Ovary (tissue), 10 donors: ENCODE measurements at regions of chr11 and their contacts with region 1.

Region 1: DNA sequence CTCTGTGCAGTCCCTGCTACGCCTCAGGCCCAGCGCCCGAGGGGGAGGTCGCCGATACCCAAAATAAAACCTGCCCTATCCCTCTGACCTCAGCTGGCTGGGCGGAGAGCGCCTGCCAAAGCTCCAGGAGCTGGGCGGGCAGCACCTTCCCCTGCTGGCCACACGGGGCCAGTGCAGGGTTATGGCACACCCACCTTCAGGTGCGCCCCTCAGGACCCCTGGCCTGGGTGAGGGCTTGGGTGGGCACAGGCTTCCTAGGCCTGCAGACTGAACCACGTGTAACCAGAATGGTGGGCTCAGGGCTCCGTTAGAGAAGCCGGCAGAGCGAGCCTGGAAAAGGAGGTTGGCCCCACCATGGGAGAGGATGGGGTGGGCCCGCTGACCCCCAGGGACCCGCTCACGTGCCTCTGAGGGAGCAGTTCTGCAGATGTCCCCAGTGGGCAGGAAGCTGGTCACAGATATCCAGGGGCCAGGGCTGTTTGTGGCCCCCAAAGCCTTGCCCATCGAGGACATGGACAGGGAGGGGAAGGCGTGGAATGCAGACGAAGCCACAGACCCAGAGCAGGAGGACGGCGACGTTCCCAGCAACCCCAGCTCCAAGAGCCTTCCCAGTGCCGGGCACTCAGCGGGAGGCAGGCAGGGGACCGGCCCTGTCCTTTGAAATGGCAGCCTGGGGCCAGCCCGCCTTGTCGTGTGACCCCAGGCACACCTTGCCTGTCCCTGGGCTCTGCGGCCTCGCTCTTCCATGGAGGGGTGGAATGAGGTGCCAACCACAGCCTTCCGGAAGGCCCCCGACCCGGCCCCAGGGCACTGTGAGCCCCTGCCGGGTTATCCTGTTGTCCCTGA is 1.6 kb upstream of the TNNT3 start:
- DNase-seq: peak in 1 of 5 donors; percentile 34
- H3K4me3 ChIP-seq: no peak overlapping the region
- H3K27ac ChIP-seq: no peak overlapping the region
- H3K4me1 ChIP-seq: peaks cover 4% of the 10 kb centered on the region
- H3K27me3 ChIP-seq: no peaks in the 10 kb centered on the region
- CTCF ChIP-seq: no peak
- EP300 ChIP-seq: no peak
- POLR2A ChIP-seq: no peak

Region 2: DNA sequence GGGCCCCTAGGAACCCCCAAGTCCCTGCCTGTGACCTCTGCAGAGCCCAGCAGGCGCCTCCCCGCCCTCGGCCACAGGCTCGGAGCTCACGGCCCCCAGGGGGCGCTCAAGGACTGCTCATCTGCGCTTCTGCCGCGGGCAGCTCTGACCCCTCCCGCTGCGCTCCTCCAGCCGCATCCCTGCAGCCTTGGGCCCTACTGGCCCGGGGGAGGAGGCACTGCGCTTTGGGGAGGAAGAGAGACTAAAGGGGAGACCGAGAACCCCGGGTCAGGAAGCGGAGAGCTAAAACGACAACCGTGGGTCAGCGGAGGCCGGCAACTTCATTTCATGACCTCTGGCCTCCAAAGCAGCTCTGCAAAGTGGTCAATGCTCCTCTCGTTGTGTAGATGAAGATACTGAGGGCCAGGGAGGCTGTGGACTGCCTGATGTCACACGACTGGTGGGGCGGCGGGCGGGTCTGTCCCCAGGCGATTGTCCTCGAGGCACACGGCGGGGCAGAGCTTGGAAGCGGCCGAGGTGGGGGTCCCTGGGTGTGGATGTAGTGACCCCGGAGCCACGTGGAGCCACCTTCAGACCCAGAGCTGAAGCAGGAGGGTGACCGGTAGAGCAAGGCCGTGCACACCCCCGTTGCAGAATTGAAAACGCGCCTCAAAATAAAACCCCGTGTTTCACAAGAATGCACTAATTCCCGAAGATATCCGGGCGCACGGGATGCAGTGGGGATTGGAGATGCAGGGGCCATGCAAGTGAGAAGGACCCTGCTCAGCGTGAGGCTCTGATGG is 223.6 kb before region 1 on chr11:
- intact Hi-C with region 1: loop called in 2 of 4 experiments (anchors 10 kb)
- DNase-seq: peak; percentile 73 to 92 (median 89)
- H3K4me3 ChIP-seq: peak overlapping the region; percentile 6
- H3K27ac ChIP-seq: peak overlapping the region in 1 of 2 donors; percentile 16
- H3K4me1 ChIP-seq: peaks cover 8% of the 10 kb centered on the region
- H3K27me3 ChIP-seq: no peaks in the 10 kb centered on the region
- CTCF ChIP-seq: peak; percentile 82 to 91 (median 85)
- EP300 ChIP-seq: no peak
- POLR2A ChIP-seq: no peak

Region 3: DNA sequence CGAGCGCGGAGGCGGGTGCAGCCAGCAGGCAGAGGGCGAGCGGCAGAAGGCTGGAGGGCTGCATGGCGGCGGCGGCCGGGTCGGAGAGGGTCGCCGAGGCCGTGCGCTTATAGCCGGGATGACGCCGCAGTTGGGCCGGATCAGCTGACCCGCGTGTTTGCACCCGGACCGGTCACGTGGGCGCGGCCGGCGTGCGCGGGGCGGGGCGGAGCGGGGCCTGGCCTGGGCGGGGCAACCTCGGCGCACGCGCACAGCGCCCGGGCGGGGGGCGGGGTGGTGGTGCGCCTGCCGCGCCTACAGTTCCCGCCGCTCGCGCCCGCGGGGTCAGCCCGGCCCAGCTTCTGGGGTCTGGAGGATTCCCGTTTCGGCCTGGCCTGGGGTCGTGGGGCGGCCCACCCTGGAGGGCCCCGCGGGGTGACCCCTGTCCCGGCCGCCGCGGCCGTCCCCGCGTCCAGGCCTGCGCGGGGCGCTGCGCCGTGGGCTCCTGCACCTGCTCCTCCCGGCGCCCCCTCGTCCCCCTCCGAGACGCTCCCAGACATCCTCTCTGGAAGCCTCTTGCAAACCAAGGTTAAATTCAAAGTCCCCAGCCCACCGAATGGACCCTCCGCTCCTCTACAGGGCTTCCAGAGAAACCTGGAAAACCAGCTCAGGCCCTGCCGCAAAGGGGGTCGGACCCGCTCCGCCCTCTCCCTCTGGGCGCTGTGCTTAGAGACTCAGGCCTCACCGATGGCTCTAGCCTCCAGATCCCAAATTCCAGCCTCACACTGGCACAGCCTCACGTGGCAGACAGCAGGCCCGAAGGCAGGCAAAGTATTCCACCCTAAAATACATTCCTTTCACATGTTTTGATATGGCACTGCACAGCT is 153.9 kb before region 1 on chr11 and contains the start of gene CTSD:
- intact Hi-C with region 1: no loop called
- DNase-seq: peak; percentile 80 to 91 (median 88)
- H3K4me3 ChIP-seq: peak within 1 kb of the TSS; percentile 72
- H3K27ac ChIP-seq: peak within 1 kb of the TSS; percentile 38 to 55
- H3K4me1 ChIP-seq: peaks cover 19% of the 10 kb centered on the region
- H3K27me3 ChIP-seq: no peaks in the 10 kb centered on the region
- CTCF ChIP-seq: no peak
- EP300 ChIP-seq: no peak
- POLR2A ChIP-seq: no peak
- total RNA-seq, gene CTSD: 107 to 545 (median 191) TPM

Region 4: GRCh38 chr11:1837171-1838076 is 80.5 kb before region 1 on chr11:
- intact Hi-C with region 1: no loop called
- DNase-seq: peak; percentile 69 to 88 (median 78)
- H3K4me3 ChIP-seq: no peak overlapping the region
- H3K27ac ChIP-seq: no peak overlapping the region
- H3K4me1 ChIP-seq: peaks cover 1% of the 10 kb centered on the region
- H3K27me3 ChIP-seq: no peaks in the 10 kb centered on the region
- CTCF ChIP-seq: peak; percentile 54 to 90 (median 84)
- EP300 ChIP-seq: no peak
- POLR2A ChIP-seq: no peak

Region 5: GRCh38 chr11:1882519-1883238 is 35.2 kb before region 1 on chr11:
- intact Hi-C with region 1: loop called in 2 of 4 experiments (anchors 5 kb)
- DNase-seq: peak; percentile 79 to 92 (median 89)
- H3K4me3 ChIP-seq: no peak overlapping the region
- H3K27ac ChIP-seq: no peak overlapping the region
- H3K4me1 ChIP-seq: no peaks in the 10 kb centered on the region
- H3K27me3 ChIP-seq: no peaks in the 10 kb centered on the region
- CTCF ChIP-seq: peak; percentile 85 to 92 (median 92)
- EP300 ChIP-seq: no peak
- POLR2A ChIP-seq: peak; percentile 2

Region 6: GRCh38 chr11:1889224-1890120 is 28.4 kb before region 1 on chr11:
- intact Hi-C with region 1: loop called in 3 of 4 experiments (anchors 1 kb)
- DNase-seq: peak in 2 of 5 donors; percentile 11 to 35
- H3K4me3 ChIP-seq: no peak overlapping the region
- H3K27ac ChIP-seq: no peak overlapping the region
- H3K4me1 ChIP-seq: no peaks in the 10 kb centered on the region
- H3K27me3 ChIP-seq: no peaks in the 10 kb centered on the region
- CTCF ChIP-seq: no peak
- EP300 ChIP-seq: no peak
- POLR2A ChIP-seq: no peak

Region 7: GRCh38 chr11:1896923-1897322 is 21.0 kb before region 1 on chr11:
- intact Hi-C with region 1: loop called in 3 of 4 experiments (anchors 1 kb)
- DNase-seq: peak in 1 of 5 donors; percentile 2
- H3K4me3 ChIP-seq: no peak overlapping the region
- H3K27ac ChIP-seq: no peak overlapping the region
- H3K4me1 ChIP-seq: no peaks in the 10 kb centered on the region
- H3K27me3 ChIP-seq: no peaks in the 10 kb centered on the region
- CTCF ChIP-seq: no peak
- EP300 ChIP-seq: no peak
- POLR2A ChIP-seq: no peak

Region 8: DNA sequence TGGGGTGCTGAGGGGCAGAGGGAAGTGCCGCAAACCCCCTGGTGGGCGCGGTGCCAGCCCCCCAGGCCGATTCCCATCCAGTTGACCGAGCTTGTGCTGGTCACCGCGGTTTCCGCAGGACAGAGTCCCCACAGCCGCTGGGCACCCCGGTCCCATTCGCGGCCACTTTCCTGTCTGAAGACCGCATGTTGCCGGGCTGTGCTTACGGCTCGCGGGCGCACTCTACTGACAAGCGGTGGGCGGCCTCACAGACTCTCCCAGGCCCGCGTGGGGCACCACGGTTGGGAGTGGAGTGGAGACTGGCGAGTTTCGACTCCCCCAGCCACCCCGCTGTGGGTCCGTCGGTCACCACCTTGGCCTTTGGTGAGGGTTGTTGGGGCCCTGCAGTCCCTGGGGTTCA is 80.4 kb after region 1 on chr11:
- intact Hi-C with region 1: no loop called
- DNase-seq: no peak
- H3K4me3 ChIP-seq: no peak overlapping the region
- H3K27ac ChIP-seq: no peak overlapping the region
- H3K4me1 ChIP-seq: no peaks in the 10 kb centered on the region
- H3K27me3 ChIP-seq: no peaks in the 10 kb centered on the region
- CTCF ChIP-seq: no peak
- EP300 ChIP-seq: no peak
- POLR2A ChIP-seq: no peak